Activated CD4-positive, alpha-beta memory T cell treated with anti-CD3 and anti-CD28 coated beads for 36 hours (primary cell): ENCODE measurements at regions of chr17 and their contacts with region 1.

Region 1: DNA sequence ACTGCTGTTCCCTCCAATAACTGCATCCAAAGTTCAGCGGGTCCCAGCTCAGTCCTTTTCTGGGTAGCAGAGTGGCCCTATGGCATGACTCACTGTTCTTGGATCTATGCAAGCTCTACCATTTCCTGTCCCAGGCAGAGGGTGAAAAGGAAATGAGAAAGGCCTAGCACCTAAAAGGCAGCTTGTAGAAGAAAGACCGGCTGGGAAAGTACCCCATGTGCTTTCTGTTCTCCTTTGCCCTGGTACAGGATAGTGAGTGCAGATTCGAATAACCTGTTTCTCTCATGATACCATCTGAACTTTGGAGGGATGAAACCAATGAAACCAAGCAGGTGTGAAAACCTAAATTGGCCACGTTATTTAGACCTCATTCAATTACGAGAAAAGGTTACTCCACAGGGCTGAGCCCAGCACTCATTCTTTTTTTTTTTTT is 12.7 kb upstream of the HASPIN start:
- DNase-seq: peak; percentile 85
- H3K4me3 Mint-ChIP-seq: peak overlapping the region; percentile 49
- H3K27ac Mint-ChIP-seq: peak overlapping the region; percentile 83
- H3K4me1 Mint-ChIP-seq: peaks cover 48% of the 10 kb centered on the region
- H3K27me3 Mint-ChIP-seq: no peaks in the 10 kb centered on the region

Region 2: DNA sequence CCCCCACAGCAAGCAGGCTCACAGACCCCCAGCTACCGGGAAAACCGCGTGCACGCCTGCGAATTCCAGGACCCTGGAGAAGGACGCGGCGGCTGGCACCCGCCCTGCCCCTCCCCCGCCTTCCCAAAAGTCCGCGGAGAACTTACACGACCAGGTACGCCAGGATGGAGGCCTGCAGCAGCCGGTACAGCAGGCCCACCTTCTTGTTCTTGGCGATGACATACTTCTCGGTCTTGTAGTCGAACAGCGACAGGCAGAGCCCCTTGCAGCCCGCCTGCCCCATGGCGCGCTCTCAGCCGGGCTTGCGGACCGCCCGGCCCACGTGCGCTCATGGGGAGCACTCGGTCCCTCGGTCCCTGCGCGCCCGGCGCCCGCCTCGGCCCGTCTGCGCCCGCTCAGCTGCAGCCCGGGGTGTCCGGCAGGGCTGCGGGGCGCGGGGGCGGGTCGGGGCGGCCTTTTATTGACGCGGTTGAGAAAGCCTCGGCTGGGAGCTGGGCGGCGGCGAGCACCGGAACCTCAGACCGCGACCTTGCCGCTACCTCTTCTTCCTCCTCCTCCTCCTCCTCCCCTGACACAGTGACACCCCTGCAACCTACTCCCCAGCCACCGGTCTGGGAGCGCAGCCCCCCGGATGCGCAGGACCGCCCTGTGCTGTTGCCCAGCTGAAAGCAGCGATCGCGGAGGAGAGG is 15.1 kb before region 1 on chr17 and contains the start of gene P2RX5:
- CTCF ChIA-PET with region 1: interaction called, 7 read pairs
- POLR2A ChIA-PET with region 1: interaction called, 24 read pairs
- intact Hi-C with region 1: loop called (anchors 1 kb)
- DNase-seq: peak; percentile 56
- H3K4me3 Mint-ChIP-seq: peak within 1 kb of the TSS; percentile 87
- H3K27ac Mint-ChIP-seq: peak within 1 kb of the TSS; percentile 76
- H3K4me1 Mint-ChIP-seq: peaks cover 20% of the 10 kb centered on the region
- H3K27me3 Mint-ChIP-seq: no peaks in the 10 kb centered on the region
- total RNA-seq, gene P2RX5: 37.6 to 43.2 TPM

Region 3: GRCh38 chr17:3723556-3724369 is 12.8 kb after region 1 on chr17 and contains the start of gene HASPIN:
- CTCF ChIA-PET with region 1: interaction called, 7 read pairs
- POLR2A ChIA-PET with region 1: interaction called, 16 read pairs
- intact Hi-C with region 1: loop called (anchors 1 kb)
- DNase-seq: peak; percentile 95
- H3K4me3 Mint-ChIP-seq: peak within 1 kb of the TSS; percentile 97
- H3K27ac Mint-ChIP-seq: peak within 1 kb of the TSS; percentile 90
- H3K4me1 Mint-ChIP-seq: peaks cover 54% of the 10 kb centered on the region
- H3K27me3 Mint-ChIP-seq: no peaks in the 10 kb centered on the region
- total RNA-seq, gene HASPIN: 22.0 to 22.7 TPM

Region 4: DNA sequence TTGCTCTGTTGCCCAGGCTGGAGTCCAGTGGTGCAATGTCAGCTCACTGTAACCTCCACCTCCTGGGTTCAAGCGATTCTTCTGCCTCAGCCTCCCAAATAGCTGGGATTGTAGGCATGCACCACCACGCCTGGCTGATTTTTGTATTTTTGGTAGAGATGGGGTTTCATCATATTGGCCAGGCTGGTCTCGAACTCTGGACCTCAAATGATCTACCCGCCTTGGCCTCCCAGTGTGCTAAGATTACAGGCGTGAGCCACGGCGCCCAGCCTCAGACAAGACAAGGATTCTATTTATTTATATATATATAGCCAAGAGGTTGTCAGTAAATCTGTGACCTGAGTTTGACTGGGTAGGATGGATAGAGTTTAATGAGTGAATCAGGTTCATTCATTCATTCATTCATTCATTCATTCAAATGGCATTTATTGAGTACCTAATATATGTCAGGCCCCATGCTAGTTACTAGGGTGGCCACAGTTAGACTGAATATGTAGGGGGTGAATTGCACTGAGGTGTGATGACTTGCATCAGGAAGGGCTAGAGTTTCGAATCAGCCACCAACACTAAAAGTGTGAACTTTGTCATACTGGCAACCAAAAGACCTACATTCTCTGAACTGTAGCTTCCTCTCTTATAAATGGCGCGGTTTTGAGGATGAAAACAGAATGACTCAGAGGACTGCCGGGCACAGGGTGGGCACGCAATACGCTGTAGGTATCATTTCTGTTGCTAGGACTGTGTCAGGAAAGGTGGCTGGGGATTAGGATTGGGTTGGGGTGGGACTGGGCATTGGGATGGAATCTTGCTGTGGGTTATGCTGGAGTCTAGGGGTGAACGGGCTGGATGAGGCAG is 52.2 kb after region 1 on chr17:
- CTCF ChIA-PET with region 1: no interaction called
- POLR2A ChIA-PET with region 1: no interaction called
- intact Hi-C with region 1: loop called (anchors 1 kb)
- DNase-seq: peak; percentile 70
- H3K4me3 Mint-ChIP-seq: peak overlapping the region; percentile 14
- H3K27ac Mint-ChIP-seq: peak overlapping the region; percentile 87
- H3K4me1 Mint-ChIP-seq: peaks cover 43% of the 10 kb centered on the region
- H3K27me3 Mint-ChIP-seq: peaks cover 2% of the 10 kb centered on the region